Mammary epithelial cell (primary cell): ENCODE measurements at regions of chr16 and their contacts with region 1.

Region 1: GRCh38 chr16:89764711-89765201 is 43.4 kb downstream of the ZNF276 start:
- DNase-seq: no peak
- H3K4me3 ChIP-seq: no peak overlapping the region
- H3K27ac ChIP-seq: no peak overlapping the region
- H3K4me1 ChIP-seq: no peaks in the 10 kb centered on the region
- H3K27me3 ChIP-seq: no peaks in the 10 kb centered on the region
- CTCF ChIP-seq: no peak

Region 2: DNA sequence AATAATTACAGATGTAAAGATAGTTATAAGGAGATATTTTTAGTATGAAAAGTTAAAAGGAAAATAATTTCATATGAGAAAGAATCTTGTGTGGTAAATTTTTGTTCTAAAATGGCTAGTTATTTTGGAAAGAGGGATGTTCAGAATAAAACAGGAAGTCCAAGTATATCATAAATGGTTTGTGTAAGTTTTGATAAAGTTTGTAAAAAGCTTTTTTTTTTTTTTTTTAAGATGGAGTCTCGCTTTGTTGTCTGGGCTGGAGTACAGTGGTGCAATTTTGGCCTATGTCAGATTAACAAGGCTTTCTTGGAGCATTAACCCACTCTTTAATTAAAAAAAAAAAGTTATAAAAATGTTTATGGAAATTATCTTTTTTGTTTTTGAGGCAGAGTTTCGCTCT is 86.5 kb before region 1 on chr16:
- CTCF ChIA-PET with region 1: no interaction called
- dilution Hi-C with region 1: no loop called
- in situ Hi-C with region 1: no loop called
- intact Hi-C with region 1: no loop called
- DNase-seq: no peak
- H3K4me3 ChIP-seq: no peak overlapping the region
- H3K27ac ChIP-seq: no peak overlapping the region
- H3K4me1 ChIP-seq: no peaks in the 10 kb centered on the region
- H3K27me3 ChIP-seq: no peaks in the 10 kb centered on the region
- CTCF ChIP-seq: no peak

Region 3: DNA sequence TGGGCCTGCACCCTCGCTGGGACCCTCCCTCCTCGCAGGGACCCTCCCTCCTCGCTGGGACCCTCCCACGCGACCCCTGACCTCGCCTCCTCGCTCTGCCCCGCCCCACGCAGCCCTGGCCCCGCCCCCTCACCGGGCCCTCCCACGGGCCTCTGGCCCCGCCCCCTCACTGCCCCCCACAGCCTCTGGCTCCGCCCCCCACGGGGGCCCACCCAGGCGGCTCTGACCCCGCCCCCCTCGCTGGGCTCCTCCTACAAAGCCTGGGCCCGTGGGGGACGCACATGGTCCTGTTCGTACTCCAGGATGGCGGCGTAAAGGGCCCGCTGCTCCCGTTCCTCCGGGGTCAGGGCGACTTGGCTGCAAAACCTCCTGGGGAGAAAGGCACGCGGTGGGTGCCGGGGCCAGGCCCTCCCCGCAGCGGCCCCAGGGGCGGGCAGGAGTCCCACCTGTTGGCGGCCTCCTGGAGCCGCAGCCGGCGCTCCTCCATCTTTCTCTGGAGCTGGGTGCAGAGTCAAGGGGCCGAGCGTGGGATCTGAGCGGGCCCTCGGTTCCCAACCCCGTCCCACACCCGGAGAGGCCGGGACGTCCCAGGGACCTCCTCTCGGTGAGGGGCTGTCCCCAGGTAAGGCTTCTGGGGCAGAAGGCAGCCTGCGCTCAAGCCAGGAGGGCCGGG is 53.0 kb before region 1 on chr16:
- CTCF ChIA-PET with region 1: no interaction called
- dilution Hi-C with region 1: loop called (anchors 5 kb)
- in situ Hi-C with region 1: no loop called
- intact Hi-C with region 1: no loop called
- DNase-seq: peak; percentile 37
- H3K4me3 ChIP-seq: peak overlapping the region; percentile 56 to 91 (median 76)
- H3K27ac ChIP-seq: peak overlapping the region; percentile 25
- H3K4me1 ChIP-seq: peaks cover 9% of the 10 kb centered on the region
- H3K27me3 ChIP-seq: no peaks in the 10 kb centered on the region
- CTCF ChIP-seq: peak in 1 of 2 donors; percentile 5

Region 4: GRCh38 chr16:89729863-89730593 is 34.7 kb before region 1 on chr16:
- CTCF ChIA-PET with region 1: no interaction called
- dilution Hi-C with region 1: loop called (anchors 5 kb)
- in situ Hi-C with region 1: no loop called
- intact Hi-C with region 1: no loop called
- DNase-seq: no peak
- H3K4me3 ChIP-seq: no peak overlapping the region
- H3K27ac ChIP-seq: no peak overlapping the region
- H3K4me1 ChIP-seq: no peaks in the 10 kb centered on the region
- H3K27me3 ChIP-seq: no peaks in the 10 kb centered on the region
- CTCF ChIP-seq: no peak

Region 5: GRCh38 chr16:89791278-89791995 is 26.7 kb after region 1 on chr16:
- CTCF ChIA-PET with region 1: no interaction called
- dilution Hi-C with region 1: loop called (anchors 5 kb)
- in situ Hi-C with region 1: no loop called
- intact Hi-C with region 1: no loop called
- DNase-seq: no peak
- H3K4me3 ChIP-seq: no peak overlapping the region
- H3K27ac ChIP-seq: no peak overlapping the region
- H3K4me1 ChIP-seq: no peaks in the 10 kb centered on the region
- H3K27me3 ChIP-seq: no peaks in the 10 kb centered on the region
- CTCF ChIP-seq: no peak

Region 6: GRCh38 chr16:89815639-89816348 is 51.0 kb after region 1 on chr16:
- CTCF ChIA-PET with region 1: no interaction called
- dilution Hi-C with region 1: no loop called
- in situ Hi-C with region 1: loop called in 1 of 2 experiments (anchors 5 kb)
- intact Hi-C with region 1: no loop called
- DNase-seq: no peak
- H3K4me3 ChIP-seq: peak overlapping the region; percentile 79 to 84 (median 80)
- H3K27ac ChIP-seq: peak overlapping the region; percentile 3
- H3K4me1 ChIP-seq: peaks cover 5% of the 10 kb centered on the region
- H3K27me3 ChIP-seq: no peaks in the 10 kb centered on the region
- CTCF ChIP-seq: no peak

Region 7: DNA sequence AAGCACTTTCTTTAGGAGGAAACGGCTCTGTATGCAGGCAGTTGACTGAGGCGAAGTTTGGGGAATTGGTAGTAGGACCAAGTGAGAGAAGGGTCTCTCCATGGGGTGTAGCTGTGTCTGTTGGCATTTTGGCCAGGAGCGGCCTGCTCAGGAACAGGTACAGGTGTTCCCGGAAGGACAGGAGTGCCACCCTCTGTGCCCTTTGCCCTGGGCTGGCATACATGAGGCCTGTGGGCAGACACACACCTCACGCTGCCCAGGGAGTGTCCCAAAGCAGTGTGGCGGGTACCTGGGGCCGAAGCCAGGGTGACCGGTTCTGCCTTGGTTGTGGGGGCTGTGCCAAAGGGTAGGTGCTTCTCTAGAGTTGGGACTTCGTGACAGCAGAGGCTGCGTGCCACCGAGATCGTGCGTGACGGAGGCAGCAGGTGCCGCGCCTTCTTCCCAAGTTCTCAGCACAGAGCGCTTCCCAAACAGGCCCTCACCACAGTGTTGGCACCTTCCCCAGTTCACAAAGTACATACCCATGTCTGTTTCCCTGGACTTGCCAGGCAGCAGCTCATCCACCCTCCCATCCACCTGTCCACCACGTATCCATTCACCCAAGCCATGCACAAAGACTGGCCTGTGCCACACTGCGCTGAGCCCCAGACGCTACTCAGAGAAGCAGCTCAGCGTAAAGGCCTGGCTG is 88.7 kb after region 1 on chr16:
- CTCF ChIA-PET with region 1: no interaction called
- dilution Hi-C with region 1: loop called (anchors 5 kb)
- in situ Hi-C with region 1: no loop called
- intact Hi-C with region 1: no loop called
- DNase-seq: no peak
- H3K4me3 ChIP-seq: no peak overlapping the region
- H3K27ac ChIP-seq: no peak overlapping the region
- H3K4me1 ChIP-seq: no peaks in the 10 kb centered on the region
- H3K27me3 ChIP-seq: no peaks in the 10 kb centered on the region
- CTCF ChIP-seq: no peak

Region 8: DNA sequence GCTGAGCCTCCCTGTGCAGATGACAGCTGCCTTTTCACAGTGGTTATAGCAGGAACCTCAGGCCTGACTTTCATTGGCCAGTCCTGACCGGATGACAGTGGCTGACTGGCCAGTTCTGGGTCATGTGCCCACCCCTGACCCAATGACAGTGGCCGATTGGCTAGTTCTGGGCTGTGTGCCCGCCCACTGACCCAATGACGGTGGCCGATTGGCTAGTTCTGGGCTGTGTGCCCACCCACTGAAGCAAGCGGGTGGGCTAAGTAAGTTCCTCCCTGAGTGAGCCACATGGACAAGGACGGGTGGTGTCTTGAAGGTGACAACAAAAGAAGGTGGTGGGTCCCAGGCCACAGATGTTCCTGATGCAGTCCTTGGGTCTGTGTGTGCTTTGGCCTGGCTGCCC is 193.3 kb after region 1 on chr16:
- CTCF ChIA-PET with region 1: no interaction called
- dilution Hi-C with region 1: no loop called
- in situ Hi-C with region 1: no loop called
- intact Hi-C with region 1: no loop called
- DNase-seq: no peak
- H3K4me3 ChIP-seq: no peak overlapping the region
- H3K27ac ChIP-seq: no peak overlapping the region
- H3K4me1 ChIP-seq: no peaks in the 10 kb centered on the region
- H3K27me3 ChIP-seq: no peaks in the 10 kb centered on the region
- CTCF ChIP-seq: no peak